CD14-positive monocyte (primary cell): ENCODE measurements at regions of chr14 and their contacts with region 1.

Region 1: GRCh38 chr14:51651388-51652167 is at the start of gene FRMD6:
- DNase-seq: peak; percentile 67 to 81 (median 76)
- H3K4me3 ChIP-seq: peak within 1 kb of the TSS; percentile 73 to 99 (median 85)
- H3K4me3 Mint-ChIP-seq: peak within 1 kb of the TSS; percentile 87 to 92
- H3K27ac ChIP-seq: peak within 1 kb of the TSS; percentile 74 to 83
- H3K27ac Mint-ChIP-seq: peak within 1 kb of the TSS in 6 of 7 donors; percentile 75 to 92 (median 85)
- H3K4me1 ChIP-seq: peaks cover 14 to 25% of the 10 kb centered on the region in 2 donors
- H3K4me1 Mint-ChIP-seq: peaks cover 23% of the 10 kb centered on the region
- H3K27me3 ChIP-seq: peaks cover 16 to 23% of the 10 kb centered on the region in 2 donors
- H3K27me3 Mint-ChIP-seq: peaks cover 21 to 32% (median 30%) of the 10 kb centered on the region in 3 donors
- CTCF ChIP-seq: peak; percentile 81
- polyA plus RNA-seq, gene FRMD6: 0.12 to 0.25 (median 0.12) TPM

Region 2: DNA sequence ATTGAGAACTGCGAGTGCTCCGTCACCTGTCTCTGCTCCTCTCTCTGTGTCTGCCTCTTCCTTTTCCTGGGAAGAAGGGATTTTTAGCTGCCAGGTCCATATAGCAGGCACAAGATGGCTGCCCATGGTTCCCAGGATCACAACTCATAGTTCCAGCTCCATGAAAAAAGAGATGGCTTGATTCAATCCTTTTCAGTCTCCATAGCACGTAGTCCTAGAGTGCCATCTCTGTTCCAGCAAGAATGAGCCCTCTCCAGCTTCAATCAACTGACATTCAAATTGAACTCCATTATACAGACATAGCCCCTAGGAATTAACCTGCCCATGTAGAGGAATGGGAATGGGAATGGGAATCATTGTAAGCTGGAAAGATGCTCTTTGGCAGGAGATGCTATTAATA is 303.1 kb after region 1 on chr14:
- intact Hi-C with region 1: no loop called
- DNase-seq: no peak
- H3K4me3 ChIP-seq: no peak overlapping the region
- H3K4me3 Mint-ChIP-seq: no peak overlapping the region
- H3K27ac ChIP-seq: no peak overlapping the region
- H3K27ac Mint-ChIP-seq: no peak overlapping the region
- H3K4me1 ChIP-seq: no peaks in the 10 kb centered on the region
- H3K4me1 Mint-ChIP-seq: peaks cover 5% of the 10 kb centered on the region
- H3K27me3 ChIP-seq: no peaks in the 10 kb centered on the region
- H3K27me3 Mint-ChIP-seq: no peaks in the 10 kb centered on the region
- CTCF ChIP-seq: no peak

Region 3: GRCh38 chr14:51979088-51979709 is 327.6 kb after region 1 on chr14:
- intact Hi-C with region 1: loop called (anchors 5 to 10 kb)
- DNase-seq: peak; percentile 70 to 79 (median 73)
- H3K4me3 ChIP-seq: no peak overlapping the region
- H3K4me3 Mint-ChIP-seq: no peak overlapping the region
- H3K27ac ChIP-seq: no peak overlapping the region
- H3K27ac Mint-ChIP-seq: no peak overlapping the region
- H3K4me1 ChIP-seq: no peaks in the 10 kb centered on the region
- H3K4me1 Mint-ChIP-seq: peaks cover 4% of the 10 kb centered on the region
- H3K27me3 ChIP-seq: peaks cover 0 to 2% of the 10 kb centered on the region in 2 donors
- H3K27me3 Mint-ChIP-seq: peaks cover 2 to 7% (median 2%) of the 10 kb centered on the region in 3 donors
- CTCF ChIP-seq: peak; percentile 93

Region 4: DNA sequence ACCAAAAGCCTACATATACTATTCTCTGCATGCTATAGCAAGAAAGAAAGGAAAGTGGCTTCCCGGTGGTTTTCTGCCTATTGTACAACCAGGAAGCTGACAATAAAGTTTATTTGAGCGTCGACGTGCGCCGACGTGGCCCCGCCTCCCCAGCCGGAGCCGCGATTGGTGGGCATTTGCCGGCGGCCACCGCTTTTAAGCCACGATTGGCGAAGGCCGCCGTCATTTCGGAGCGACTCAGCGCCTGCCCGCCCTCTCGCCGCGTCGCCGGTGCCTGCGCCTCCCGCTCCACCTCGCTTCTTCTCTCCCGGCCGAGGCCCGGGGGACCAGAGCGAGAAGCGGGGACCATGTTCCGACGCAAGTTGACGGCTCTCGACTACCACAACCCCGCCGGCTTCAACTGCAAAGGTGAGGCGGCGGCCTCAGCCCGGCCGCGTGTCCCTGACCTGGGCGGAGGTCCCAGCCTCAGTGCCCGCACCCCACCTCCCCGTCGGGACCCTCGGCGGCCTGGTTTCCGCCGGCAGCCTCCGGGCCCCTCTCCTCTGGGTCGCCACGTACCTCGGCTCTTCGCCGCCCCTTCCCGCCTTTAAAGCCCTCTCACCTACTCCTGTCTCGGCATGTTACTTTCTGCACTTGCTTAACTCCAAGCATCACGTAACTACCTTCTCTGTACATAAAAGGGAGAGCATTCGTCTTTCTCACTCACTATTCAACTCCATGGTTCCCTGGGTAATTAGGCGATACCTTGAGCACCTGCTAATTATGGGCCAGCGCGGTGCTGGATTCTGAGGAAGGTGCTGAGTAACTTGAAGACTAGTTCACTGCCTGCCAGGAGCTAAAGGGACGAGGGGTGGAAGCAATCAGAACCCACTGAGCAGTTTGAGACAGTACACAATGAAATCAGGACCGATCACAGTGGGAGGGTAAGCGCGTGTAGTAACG is 338.0 kb after region 1 on chr14 and contains the start of gene RTRAF:
- intact Hi-C with region 1: loop called (anchors 5 to 10 kb)
- DNase-seq: peak; percentile 89 to 92 (median 91)
- H3K4me3 ChIP-seq: peak within 1 kb of the TSS; percentile 88 to 99 (median 95)
- H3K4me3 Mint-ChIP-seq: peak within 1 kb of the TSS; percentile 87 to 92
- H3K27ac ChIP-seq: peak within 1 kb of the TSS; percentile 60 to 94
- H3K27ac Mint-ChIP-seq: peak within 1 kb of the TSS; percentile 93 to 96 (median 94)
- H3K4me1 ChIP-seq: peaks cover 11 to 17% of the 10 kb centered on the region in 2 donors
- H3K4me1 Mint-ChIP-seq: peaks cover 17% of the 10 kb centered on the region
- H3K27me3 ChIP-seq: no peaks in the 10 kb centered on the region
- H3K27me3 Mint-ChIP-seq: no peaks in the 10 kb centered on the region
- CTCF ChIP-seq: no peak
- polyA plus RNA-seq, gene RTRAF: 51.6 to 152 (median 149) TPM